Activated CD4-positive, alpha-beta T cell treated with anti-CD3 and anti-CD28 coated beads, Interleukin-2, amount 10 ng/mL, durations not matched to agents 24 days and 14 days (primary cell): ENCODE measurements at regions of chr15 and their contacts with region 1.

Region 1: DNA sequence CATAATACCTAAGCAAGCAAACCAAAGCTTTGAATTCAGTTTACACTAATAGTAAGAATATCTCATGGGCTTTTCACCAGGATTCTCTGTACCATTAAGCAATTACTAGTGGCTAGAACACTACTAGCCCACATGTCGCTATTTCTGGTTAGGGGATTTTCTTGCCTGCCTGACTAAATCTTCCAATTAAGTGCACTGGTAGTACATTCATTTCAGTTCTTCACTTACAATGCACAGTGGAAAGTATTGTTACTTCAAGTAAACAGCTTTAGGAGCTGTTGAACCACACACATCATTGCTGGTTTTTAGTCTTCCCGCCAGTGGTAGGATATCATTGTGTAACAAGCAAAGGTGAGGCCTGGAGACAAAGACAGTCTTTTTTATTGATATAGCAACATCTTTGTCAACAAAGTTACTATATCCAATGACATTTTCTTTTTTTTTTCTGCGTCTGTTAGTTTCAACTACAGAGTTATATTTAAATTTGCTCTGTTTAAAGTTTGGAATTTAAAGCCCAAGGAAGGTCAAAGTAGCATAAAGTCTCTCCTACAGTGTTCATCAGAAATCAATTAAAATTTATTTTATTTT is 826.8 kb upstream of the NR2F2 start:
- DNase-seq: no peak
- H3K4me3 Mint-ChIP-seq: no peak overlapping the region
- H3K27ac Mint-ChIP-seq: no peak overlapping the region
- H3K4me1 Mint-ChIP-seq: peaks cover 9% of the 10 kb centered on the region
- H3K27me3 Mint-ChIP-seq: no peaks in the 10 kb centered on the region

Region 2: DNA sequence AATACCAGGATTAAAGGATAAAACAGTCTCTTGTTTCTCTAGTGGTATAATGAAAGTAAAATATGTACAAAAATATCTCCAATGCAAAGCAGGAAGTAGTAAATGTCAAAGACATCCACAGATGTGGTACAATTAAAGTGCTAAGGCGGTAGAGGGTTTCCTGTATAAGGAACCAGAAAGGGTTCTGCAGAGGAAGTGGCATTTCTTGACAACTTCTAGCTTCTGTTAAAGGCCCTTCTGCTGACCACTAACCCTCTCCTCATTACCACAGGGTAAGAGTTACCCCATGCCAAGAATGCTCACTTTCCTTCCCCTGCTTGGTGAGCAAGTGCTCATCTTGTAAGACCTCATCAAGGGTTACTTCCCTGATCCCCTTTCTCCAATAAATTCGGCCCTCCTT is 56.9 kb before region 1 on chr15:
- intact Hi-C with region 1: loop called (anchors 2 kb)
- DNase-seq: peak; percentile 84
- H3K4me3 Mint-ChIP-seq: peak overlapping the region; percentile 52
- H3K27ac Mint-ChIP-seq: peak overlapping the region; percentile 48
- H3K4me1 Mint-ChIP-seq: peaks cover 26% of the 10 kb centered on the region
- H3K27me3 Mint-ChIP-seq: peaks cover 8% of the 10 kb centered on the region